ENCODE measurements at regions of chr9 and their contacts with region 1.

Region 1: DNA sequence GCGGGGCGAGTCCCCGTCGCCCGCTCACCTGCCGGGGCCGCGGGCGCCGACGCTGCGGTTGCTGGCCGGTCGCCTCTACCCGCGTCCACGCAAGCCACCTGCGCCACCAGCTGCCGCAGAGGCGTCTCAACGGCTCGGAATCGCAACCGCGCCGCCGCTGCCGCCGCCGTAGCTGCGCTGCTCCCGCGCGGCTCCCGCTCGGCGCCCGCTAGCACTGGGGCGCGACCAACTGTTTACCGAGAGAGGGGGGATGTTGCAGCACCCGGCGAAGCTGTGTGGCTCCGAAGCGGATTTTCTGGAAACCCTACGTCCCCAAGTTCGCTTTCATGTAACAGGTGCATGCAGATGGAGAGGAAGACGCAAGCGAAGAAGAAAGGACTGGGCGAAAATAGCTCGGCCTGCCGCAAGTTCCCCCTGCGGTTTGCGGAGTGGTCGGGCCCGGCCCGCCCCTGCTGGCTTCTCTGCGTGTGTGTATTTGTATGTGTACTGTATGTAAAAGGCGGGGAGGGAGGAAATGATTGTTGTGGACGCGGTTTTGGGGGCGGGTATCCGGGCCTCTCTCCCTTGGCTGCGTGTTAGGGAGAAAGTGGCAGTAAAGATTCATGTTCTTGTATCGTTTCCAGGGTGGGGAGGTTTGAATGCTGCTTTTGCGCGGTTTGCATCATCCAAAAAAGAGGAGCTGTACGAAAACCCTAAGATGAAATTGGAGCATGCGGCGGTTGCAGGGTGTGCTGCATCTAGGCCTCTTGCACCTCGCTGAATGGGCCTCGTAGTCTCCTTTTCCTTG is at the start of gene PSIP1:
- DNase-seq: peak; percentile 81
- H3K4me3 ChIP-seq: peak within 1 kb of the TSS; percentile 81 to 99 (median 96)
- H3K27ac ChIP-seq: peak within 1 kb of the TSS; percentile 88 to 96 (median 90)
- H3K4me1 ChIP-seq: peaks cover 0 to 27% (median 22%) of the 10 kb centered on the region in 4 donors
- H3K27me3 ChIP-seq: no peaks in the 10 kb centered on the region
- CTCF ChIP-seq: peak in 3 of 4 experiments; percentile 25 to 42 (median 40)
- EP300 ChIP-seq: no peak
- POLR2A ChIP-seq: no peak
- total RNA-seq, gene PSIP1: 65.7 to 89.1 (median 72.2) TPM

Region 2: DNA sequence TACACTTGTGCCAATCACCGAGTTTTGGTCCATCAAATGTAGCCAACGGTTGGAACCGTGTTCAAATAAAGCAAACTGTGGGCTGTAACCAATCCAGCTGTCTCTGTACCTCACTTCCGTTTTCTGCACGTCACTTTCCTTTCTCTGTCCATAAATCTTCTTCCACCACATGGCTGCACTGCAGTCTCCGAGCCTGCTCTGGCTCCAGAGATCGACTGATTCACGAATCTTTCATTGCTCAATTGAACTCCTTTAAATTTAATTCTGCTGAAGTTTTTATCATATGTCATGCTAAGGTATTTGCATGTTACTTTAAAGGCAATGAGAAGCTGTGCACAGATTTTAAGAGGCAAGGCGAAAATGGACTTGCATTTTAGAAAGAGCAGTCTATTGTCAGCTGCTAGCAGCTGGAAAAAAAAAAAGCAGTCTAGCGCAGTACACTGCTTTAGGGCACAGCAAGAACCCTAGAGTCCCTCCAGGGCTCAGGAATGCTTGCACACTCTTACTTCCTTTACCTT is 217.1 kb before region 1 on chr9:
- intact Hi-C with region 1: loop called (anchors 5 kb)
- DNase-seq: no peak
- H3K4me3 ChIP-seq: peak overlapping the region in 2 of 4 donors; percentile 11 to 21
- H3K27ac ChIP-seq: peak overlapping the region; percentile 81 to 83 (median 82)
- H3K4me1 ChIP-seq: peaks cover 0 to 38% (median 31%) of the 10 kb centered on the region in 4 donors
- H3K27me3 ChIP-seq: no peaks in the 10 kb centered on the region
- CTCF ChIP-seq: no peak
- EP300 ChIP-seq: no peak
- POLR2A ChIP-seq: no peak

Region 3: GRCh38 chr9:15552636-15553527 is 41.9 kb after region 1 on chr9 and contains the start of gene CCDC171:
- intact Hi-C with region 1: loop called (anchors 1 kb)
- DNase-seq: peak; percentile 98
- H3K4me3 ChIP-seq: peak within 1 kb of the TSS; percentile 66 to 85 (median 73)
- H3K27ac ChIP-seq: peak within 1 kb of the TSS; percentile 89 to 94 (median 91)
- H3K4me1 ChIP-seq: peaks cover 0 to 8% (median 6%) of the 10 kb centered on the region in 4 donors
- H3K27me3 ChIP-seq: no peaks in the 10 kb centered on the region
- CTCF ChIP-seq: no peak
- EP300 ChIP-seq: no peak
- POLR2A ChIP-seq: peak; percentile 23 to 41
- total RNA-seq, gene CCDC171: 2.9 to 6.1 (median 3.1) TPM

Region 4: DNA sequence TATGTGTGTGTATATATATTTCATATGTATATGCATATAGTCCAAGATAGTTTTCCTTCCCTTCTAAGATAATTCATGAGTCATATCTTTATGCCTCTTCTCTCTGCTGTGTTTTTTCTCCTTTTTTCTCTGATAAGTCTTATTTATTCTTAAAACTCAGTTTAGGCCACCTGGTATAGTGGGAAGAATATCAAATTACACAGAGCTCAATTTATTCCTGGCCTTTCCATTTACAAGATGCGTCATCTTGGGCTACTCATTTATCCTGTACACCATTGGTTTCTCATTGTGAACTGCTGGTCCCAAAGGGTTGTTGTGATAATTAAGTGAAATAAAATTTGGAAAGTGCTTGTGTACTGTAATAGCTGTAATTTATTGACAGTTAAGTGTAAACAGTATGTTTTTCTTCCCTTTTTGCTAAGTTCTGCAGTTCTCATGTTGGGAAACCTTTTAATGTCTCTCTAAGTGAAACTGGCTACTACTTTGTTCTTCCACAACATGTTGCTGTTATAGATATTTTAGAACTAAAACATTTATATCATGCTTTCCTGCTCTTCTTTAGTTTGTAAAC is 61.3 kb after region 1 on chr9:
- intact Hi-C with region 1: no loop called
- DNase-seq: no peak
- H3K4me3 ChIP-seq: no peak overlapping the region
- H3K27ac ChIP-seq: no peak overlapping the region
- H3K4me1 ChIP-seq: no peaks in the 10 kb centered on the region
- H3K27me3 ChIP-seq: no peaks in the 10 kb centered on the region
- CTCF ChIP-seq: no peak
- EP300 ChIP-seq: no peak
- POLR2A ChIP-seq: no peak

Region 5: DNA sequence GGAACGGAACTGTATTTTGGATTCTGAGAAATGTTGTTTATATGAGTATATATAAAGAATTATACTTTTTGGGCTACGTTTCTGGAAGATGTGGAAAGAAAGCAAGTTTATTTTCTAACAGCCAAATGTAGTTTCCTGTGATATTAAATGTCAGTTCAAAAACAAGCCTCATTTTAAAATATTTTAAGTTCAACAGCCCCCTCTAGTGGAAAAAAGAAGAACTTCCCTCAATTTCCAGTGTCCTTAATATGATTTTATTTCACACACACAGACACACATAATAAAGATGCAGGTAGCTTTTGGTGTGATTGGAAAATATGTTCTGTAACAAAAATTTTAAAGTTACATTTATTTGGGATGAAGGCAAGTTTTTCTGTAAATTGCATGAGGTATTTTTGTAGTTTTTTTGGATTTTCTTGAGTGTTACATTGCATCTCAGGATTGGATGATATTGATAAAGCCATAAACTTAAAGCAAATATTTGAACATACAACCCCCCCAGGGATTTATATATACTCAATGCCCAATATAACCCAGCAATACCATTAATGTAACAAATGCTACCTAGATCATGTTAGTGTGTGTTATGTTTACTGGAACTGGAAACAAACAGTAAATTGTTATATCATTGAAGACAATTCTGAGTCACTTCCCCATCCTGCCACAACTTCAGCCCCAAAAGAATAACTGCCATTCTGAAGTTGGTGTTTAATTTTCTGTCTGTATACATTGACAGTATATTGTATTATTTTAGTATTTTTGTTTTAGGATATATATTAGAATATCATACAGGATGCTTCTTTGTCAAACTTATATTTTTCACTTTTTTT is 95.9 kb after region 1 on chr9:
- intact Hi-C with region 1: loop called (anchors 1 kb)
- DNase-seq: no peak
- H3K4me3 ChIP-seq: no peak overlapping the region
- H3K27ac ChIP-seq: no peak overlapping the region
- H3K4me1 ChIP-seq: peaks cover 0 to 3% (median 0%) of the 10 kb centered on the region in 4 donors
- H3K27me3 ChIP-seq: no peaks in the 10 kb centered on the region
- CTCF ChIP-seq: peak in 3 of 4 experiments; percentile 56 to 84 (median 56)
- EP300 ChIP-seq: no peak
- POLR2A ChIP-seq: no peak

Measured in sigmoid colon (tissue), 7 donors.